Activated CD4-positive, alpha-beta T cell treated with anti-CD3 and anti-CD28 coated beads, Interleukin-2, amount 10 ng/mL, durations not matched to agents 7 days and 5 days (primary cell): ENCODE measurements at regions of chr2 and their contacts with region 1.

Region 1: DNA sequence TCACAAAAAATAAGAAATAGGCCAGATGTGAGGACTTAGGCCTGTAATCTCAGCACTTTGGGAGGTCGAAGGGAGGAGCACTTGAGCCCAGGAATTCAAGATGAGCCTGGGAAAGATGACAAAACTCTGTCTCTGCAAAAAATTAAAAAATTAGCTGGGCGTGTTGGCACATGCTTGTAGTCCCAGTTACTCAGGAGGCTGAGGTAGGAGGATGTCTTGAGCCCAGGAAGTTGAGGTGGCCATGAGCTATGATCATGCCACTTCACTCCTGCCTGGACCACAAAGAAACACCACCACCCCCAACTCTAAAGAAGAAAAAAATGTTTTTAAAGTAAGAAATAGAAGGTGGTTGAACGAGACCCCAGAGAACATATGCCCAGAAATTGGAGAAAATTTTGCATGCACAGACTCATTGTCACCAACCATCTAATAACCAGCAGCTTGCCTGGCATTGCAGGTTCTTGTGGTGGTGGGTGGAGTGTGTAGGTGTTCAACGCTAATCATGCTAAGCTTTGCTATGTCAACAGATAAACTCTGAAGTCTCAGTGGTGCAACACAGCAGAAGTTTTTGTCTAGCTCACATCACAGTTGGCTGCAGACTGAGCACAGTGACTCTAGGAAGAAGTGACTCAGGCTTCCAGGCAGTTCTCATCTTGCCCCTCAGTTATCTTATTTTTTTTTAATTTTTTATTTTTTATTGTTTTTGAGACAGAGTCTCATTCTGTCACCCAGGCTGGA is 18.6 kb downstream of the ARL4C start:
- DNase-seq: peak; percentile 18
- H3K4me3 Mint-ChIP-seq: no peak overlapping the region
- H3K27ac Mint-ChIP-seq: peak overlapping the region; percentile 72
- H3K4me1 Mint-ChIP-seq: peaks cover 75% of the 10 kb centered on the region
- H3K27me3 Mint-ChIP-seq: no peaks in the 10 kb centered on the region

Region 2: GRCh38 chr2:234463626-234464290 is 14.5 kb before region 1 on chr2:
- CTCF ChIA-PET with region 1: interaction called, 16 read pairs
- POLR2A ChIA-PET with region 1: no interaction called
- DNase-seq: peak; percentile 83
- H3K4me3 Mint-ChIP-seq: peak overlapping the region; percentile 66
- H3K27ac Mint-ChIP-seq: peak overlapping the region; percentile 95
- H3K4me1 Mint-ChIP-seq: peaks cover 66% of the 10 kb centered on the region
- H3K27me3 Mint-ChIP-seq: no peaks in the 10 kb centered on the region